ENCODE measurements at regions of chr15 and their contacts with region 1.

Region 1: GRCh38 chr15:60358935-60359682 is 38.7 kb downstream of the ANXA2 start:
- DNase-seq: no peak
- H3K4me3 ChIP-seq: no peak overlapping the region
- H3K27ac ChIP-seq: no peak overlapping the region
- H3K4me1 ChIP-seq: peaks cover 6% of the 10 kb centered on the region
- H3K27me3 ChIP-seq: no peaks in the 10 kb centered on the region
- CTCF ChIP-seq: no peak

Region 2: GRCh38 chr15:60162241-60162967 is 196.7 kb before region 1 on chr15:
- intact Hi-C with region 1: no loop called
- DNase-seq: no peak
- H3K4me3 ChIP-seq: no peak overlapping the region
- H3K27ac ChIP-seq: no peak overlapping the region
- H3K4me1 ChIP-seq: no peaks in the 10 kb centered on the region
- H3K27me3 ChIP-seq: no peaks in the 10 kb centered on the region
- CTCF ChIP-seq: no peak

Region 3: DNA sequence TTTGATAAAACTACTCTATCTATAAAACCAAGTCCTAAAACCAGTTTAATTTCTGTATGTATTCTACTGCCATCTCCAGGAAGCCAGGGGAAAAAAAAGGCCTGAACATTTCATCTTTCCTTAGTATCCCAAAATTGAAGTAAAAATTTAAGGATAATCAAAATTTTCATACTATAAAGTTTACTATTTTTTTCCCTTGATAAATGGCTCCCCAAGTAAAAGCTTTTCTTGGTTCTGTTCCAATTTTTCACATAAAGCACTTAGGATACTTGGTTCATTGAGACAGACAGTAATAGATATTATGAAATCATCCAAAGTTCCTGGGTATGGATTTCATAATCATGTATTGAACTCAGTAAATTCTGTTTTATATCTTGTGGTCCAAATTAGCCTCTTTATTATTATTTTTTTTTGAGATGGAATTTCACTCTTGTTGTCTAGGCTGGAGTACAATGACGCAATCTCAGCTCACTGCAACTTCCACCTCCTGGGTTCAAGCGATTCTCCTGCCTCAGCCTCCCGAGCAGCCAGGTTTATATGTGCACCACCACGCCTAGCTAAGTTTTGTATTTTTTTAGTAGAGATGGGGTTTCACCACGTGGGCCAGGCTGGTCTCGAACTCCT is 85.3 kb after region 1 on chr15:
- intact Hi-C with region 1: loop called (anchors 5 kb)
- DNase-seq: no peak
- H3K4me3 ChIP-seq: no peak overlapping the region
- H3K27ac ChIP-seq: no peak overlapping the region
- H3K4me1 ChIP-seq: no peaks in the 10 kb centered on the region
- H3K27me3 ChIP-seq: no peaks in the 10 kb centered on the region
- CTCF ChIP-seq: peak; percentile 41

Measured in colonic mucosa (tissue), 4 donors.